Motor neuron (in vitro differentiated cells): ENCODE measurements at regions of chr20 and their contacts with region 1.

Region 1: DNA sequence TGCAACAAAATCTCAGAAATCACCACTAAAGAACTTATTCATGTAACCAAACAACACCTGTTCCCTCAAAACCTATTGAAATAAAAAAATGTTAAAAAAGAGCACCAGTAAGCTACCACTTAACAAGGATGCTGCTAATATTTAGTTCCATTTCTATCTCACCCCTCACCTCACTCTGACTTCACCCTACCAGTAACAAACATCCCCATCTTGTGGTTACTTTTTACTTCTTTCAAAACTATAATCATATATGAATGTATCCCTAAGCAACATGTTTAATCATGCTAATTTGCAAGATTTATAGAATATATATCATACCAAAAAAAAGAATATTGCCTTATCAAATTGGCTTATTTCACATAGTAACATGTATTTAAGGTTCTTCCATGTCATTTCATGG is 27.4 kb upstream of the SLC24A3 start:
- ATAC-seq: no peak
- H3K4me3 ChIP-seq: no peak overlapping the region
- H3K27ac ChIP-seq: no peak overlapping the region
- H3K4me1 ChIP-seq: no peaks in the 10 kb centered on the region

Region 2: GRCh38 chr20:18904624-18905023 is 280.5 kb before region 1 on chr20:
- in situ Hi-C with region 1: loop called in 1 of 9 experiments (anchors 25 kb)
- ATAC-seq: peak in 3 of 8 experiments; percentile 38 to 55 (median 42)
- H3K4me3 ChIP-seq: no peak overlapping the region
- H3K27ac ChIP-seq: no peak overlapping the region
- H3K4me1 ChIP-seq: no peaks in the 10 kb centered on the region

Region 3: GRCh38 chr20:19095762-19096161 is 89.3 kb before region 1 on chr20:
- in situ Hi-C with region 1: no loop called
- ATAC-seq: peak in 2 of 8 experiments; percentile 16 to 42
- H3K4me3 ChIP-seq: no peak overlapping the region
- H3K27ac ChIP-seq: no peak overlapping the region
- H3K4me1 ChIP-seq: no peaks in the 10 kb centered on the region